ENCODE measurements at regions of chr1 and their contacts with region 1.

Region 1: DNA sequence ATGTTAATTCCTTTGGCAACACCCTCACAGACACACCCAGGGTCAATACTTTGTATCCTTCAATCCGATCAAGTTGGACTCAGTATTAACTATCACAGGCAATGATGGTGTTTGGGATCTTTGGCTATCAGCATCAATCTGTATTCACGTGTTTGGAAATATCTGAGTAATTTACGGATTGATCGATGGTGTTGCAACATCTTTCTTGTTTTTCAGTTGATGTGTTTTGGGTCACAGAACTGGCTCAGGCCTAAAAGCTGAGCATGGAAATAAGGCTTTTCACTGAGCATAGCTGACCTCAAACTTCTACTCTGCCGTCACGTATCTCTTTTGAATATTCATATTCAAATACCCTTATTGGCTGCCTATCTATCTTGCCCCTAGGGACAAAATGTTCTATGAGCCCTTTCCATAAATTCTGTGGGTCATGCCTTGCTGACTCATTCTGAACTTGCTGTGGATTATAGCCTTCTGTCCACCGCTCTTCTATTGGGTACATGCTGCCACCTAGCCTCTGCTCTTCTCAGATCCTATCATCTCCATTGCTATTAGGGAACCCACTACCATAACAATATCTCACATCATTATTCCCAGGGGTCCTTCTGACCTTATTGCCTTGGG is 156.0 kb downstream of the PDE4B start:
- DNase-seq: peak in 1 of 10 donors; percentile 35
- H3K4me3 ChIP-seq: no peak overlapping the region
- H3K27ac ChIP-seq: peak overlapping the region in 15 of 59 donors; percentile 7 to 67 (median 42)
- H3K27me3 ChIP-seq: no peaks in the 10 kb centered on the region
- CTCF ChIP-seq: peak in 53 of 56 donors; percentile 16 to 69 (median 41)

Region 2: GRCh38 chr1:65209005-65209885 is 739.5 kb before region 1 on chr1:
- intact Hi-C with region 1: loop called in 1 of 2 experiments (anchors 10 kb)
- DNase-seq: peak in 1 of 10 donors; percentile 35
- H3K4me3 ChIP-seq: peak overlapping the region in 4 of 59 donors; percentile 7 to 31 (median 14)
- H3K27ac ChIP-seq: peak overlapping the region in 14 of 59 donors; percentile 8 to 63 (median 44)
- H3K27me3 ChIP-seq: no peaks in the 10 kb centered on the region
- CTCF ChIP-seq: peak; percentile 55 to 84 (median 73)

Region 3: GRCh38 chr1:65431111-65431705 is 517.5 kb before region 1 on chr1:
- intact Hi-C with region 1: loop called in 1 of 2 experiments (anchors 5 kb)
- DNase-seq: no peak
- H3K4me3 ChIP-seq: no peak overlapping the region
- H3K27ac ChIP-seq: peak overlapping the region in 46 of 59 donors; percentile 0 to 76 (median 46)
- H3K27me3 ChIP-seq: no peaks in the 10 kb centered on the region
- CTCF ChIP-seq: peak; percentile 42 to 87 (median 76)

Region 4: GRCh38 chr1:65872301-65872700 is 76.4 kb before region 1 on chr1:
- intact Hi-C with region 1: no loop called
- DNase-seq: no peak
- H3K4me3 ChIP-seq: no peak overlapping the region
- H3K27ac ChIP-seq: no peak overlapping the region
- H3K27me3 ChIP-seq: no peaks in the 10 kb centered on the region
- CTCF ChIP-seq: no peak

Region 5: GRCh38 chr1:66069976-66070876 is 121.5 kb after region 1 on chr1:
- intact Hi-C with region 1: no loop called
- DNase-seq: no peak
- H3K4me3 ChIP-seq: no peak overlapping the region
- H3K27ac ChIP-seq: peak overlapping the region in 5 of 59 donors; percentile 9 to 22 (median 14)
- H3K27me3 ChIP-seq: no peaks in the 10 kb centered on the region
- CTCF ChIP-seq: no peak